Right cardiac atrium (tissue), 5 donors: ENCODE measurements at regions of chr17 and their contacts with region 1.

Region 1: DNA sequence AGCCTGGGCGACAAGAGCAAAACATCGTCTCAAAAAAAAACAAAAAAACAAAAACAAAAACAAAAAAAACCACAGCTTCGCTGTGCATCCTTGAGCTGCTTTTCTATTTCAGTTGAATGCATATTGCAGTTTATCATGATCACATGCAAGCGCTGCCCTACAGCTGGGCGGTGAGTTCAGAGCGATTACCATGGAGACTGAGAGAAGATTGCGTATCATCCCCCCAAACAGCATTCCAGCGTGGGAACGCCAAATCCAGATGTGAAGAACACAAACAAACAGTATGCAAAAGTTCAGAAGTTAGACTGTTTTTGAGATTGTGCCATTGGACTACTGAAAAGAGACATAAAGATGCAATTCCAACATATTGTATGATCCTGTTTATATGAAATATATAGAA is 15.1 kb upstream of the SLC52A1 start:
- DNase-seq: no peak
- ATAC-seq: no peak
- H3K4me3 ChIP-seq: no peak overlapping the region
- H3K27ac ChIP-seq: no peak overlapping the region
- H3K4me1 ChIP-seq: peaks cover 2% of the 10 kb centered on the region
- H3K27me3 ChIP-seq: no peaks in the 10 kb centered on the region

Region 2: DNA sequence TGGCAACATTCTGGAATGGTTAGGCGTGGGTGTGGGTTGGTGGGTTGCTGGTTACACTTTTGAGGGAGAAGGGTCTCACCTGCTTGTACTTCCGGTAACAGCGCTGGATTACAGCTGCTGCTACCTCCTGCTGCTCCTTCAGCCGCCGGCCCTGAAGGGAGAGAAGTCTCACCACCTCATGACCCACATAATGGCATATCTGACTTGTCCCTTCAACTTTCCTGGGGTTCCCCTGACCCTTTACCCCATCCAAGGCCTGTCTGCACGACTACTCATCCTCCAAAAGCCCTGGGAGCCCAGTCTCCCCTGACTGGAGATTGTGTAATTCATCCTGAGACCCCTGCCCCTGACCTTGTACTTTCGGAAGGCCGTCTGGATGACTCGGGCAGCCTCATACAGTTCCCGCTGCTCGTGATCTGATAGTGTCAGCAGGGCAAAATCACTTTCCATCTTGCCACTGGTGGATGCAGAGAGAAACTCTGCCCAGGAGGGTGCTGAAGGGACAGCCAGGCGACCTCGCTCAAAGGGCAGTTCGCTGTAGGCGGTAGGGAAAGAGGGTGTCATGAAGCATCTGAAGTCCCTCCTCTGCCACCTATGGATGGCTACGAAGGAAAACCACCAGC is 80.6 kb before region 1 on chr17:
- intact Hi-C with region 1: loop called in 1 of 4 experiments (anchors 10 kb)
- DNase-seq: no peak
- ATAC-seq: no peak
- H3K4me3 ChIP-seq: no peak overlapping the region
- H3K27ac ChIP-seq: peak overlapping the region; percentile 10
- H3K4me1 ChIP-seq: peaks cover 4% of the 10 kb centered on the region
- H3K27me3 ChIP-seq: no peaks in the 10 kb centered on the region

Region 3: GRCh38 chr17:5111402-5112204 is 61.3 kb after region 1 on chr17 and contains the start of gene ZNF232:
- intact Hi-C with region 1: no loop called
- DNase-seq: peak; percentile 96 to 98 (median 98)
- ATAC-seq: peak; percentile 96 to 97
- H3K4me3 ChIP-seq: peak within 1 kb of the TSS; percentile 81
- H3K27ac ChIP-seq: peak within 1 kb of the TSS; percentile 79
- H3K4me1 ChIP-seq: no peaks in the 10 kb centered on the region
- H3K27me3 ChIP-seq: no peaks in the 10 kb centered on the region
- total RNA-seq, gene ZNF232: 4.0 to 7.4 (median 5.6) TPM